ENCODE measurements at regions of chr3 and their contacts with region 1.

Region 1: DNA sequence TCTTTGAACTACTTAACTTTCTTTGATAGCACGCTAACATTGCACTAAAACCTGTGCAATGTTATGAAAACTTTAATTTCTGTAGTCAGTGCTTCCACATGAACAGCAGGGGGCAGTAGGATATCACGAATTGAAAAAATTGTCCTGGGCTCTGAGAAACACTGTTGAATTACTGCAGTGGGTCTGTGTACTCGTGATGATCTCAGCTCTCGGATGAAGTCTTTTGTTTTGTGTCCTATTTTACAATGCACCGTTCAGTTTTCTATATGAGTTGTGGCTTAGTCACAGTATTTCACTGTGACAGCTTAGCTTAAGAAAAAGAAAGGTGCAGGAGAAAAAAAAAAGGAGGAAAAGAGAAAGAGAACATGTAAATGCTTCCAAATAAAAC is 141.3 kb upstream of the CCDC54 start:
- DNase-seq: no peak
- ATAC-seq: peak; percentile 82

Region 2: GRCh38 chr3:107208100-107208499 is 27.8 kb before region 1 on chr3:
- intact Hi-C with region 1: loop called (anchors 1 kb)
- DNase-seq: no peak
- ATAC-seq: peak; percentile 94

Region 3: GRCh38 chr3:107429320-107430181 is 193.6 kb after region 1 on chr3:
- intact Hi-C with region 1: loop called (anchors 2 kb)
- DNase-seq: peak; percentile 84
- ATAC-seq: peak; percentile 88

Region 4: DNA sequence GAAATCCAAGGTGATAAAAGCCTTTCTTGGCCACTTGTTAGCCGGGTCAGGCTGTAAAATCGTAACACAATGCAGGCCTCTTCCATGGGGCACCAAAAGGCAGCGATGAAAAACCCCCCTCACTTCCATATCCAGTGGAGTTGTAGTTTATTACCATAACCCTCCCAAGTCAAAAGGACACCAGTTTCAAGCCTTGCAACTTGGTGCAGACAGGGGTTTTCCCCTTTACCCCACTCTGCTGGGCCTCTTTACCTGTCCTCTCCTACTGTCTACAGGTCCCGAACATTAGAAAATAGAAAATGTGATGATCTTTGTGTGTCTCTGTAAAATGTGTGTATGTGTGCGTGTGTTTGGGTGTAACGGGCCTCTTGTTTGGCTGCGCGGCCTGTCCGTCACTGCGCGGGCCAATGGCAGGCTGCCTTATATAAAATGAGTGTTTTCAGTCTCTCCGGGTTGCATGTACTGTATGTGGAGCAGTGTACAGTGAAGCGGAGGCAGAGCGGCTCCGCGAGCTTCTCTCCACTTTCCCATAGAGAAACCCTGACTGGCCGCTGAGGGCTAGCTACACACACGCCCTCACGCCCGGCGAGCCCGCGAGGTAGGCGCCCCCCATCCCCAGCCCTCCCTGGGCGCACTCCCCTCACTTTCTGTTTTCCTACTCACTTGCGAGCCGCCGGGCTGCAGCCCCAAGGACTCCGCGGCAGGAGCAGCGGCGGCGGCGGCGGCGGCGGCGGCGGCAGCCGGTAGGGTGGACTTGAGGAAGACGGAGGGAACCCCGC is 286.8 kb after region 1 on chr3 and contains the start of gene BBX:
- intact Hi-C with region 1: loop called (anchors 5 kb)
- DNase-seq: peak; percentile 94
- ATAC-seq: peak; percentile 98
- total RNA-seq, gene BBX: 37.7 TPM

Region 5: DNA sequence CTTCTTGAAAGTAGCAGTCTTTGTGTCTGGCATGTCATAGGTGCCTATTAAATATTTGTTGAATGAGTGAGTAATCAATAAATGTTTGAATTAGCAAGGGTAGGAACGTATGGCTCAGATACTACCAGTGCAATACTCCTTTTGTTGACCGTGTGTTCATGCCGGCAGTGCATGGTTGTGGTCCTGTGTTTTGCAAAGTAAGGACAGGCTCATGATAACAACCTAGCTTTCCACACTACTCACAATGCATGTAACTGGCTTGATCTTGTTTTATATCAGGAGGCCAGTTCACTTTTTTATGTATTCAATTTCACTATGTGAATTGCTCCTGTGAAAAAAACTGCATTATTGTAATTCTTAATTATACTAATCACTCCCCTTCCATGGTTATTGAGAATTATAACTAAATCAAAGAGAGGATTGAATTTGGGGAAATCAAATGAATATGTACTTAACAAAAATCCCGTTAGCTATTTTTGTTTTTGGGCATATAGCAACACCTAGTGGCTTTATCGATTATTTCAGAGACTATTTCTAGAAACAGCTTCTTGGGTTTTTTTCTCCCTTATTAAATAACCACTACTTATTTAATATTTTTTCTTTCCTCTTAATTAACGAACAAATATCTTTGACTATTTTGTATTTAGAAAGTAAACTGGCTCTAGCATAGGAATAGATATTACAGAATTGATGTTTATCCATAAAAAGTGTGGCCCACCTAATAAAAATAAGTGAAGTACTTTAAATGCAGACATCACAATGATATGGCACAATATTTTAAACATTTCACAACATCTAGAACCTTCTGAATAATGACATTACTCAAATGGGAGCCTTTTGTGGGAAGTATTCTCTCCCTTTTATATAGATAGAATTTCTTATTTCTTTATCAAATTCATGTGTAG is 505.3 kb after region 1 on chr3:
- intact Hi-C with region 1: loop called (anchors 5 kb)
- DNase-seq: no peak
- ATAC-seq: no peak

Region 6: DNA sequence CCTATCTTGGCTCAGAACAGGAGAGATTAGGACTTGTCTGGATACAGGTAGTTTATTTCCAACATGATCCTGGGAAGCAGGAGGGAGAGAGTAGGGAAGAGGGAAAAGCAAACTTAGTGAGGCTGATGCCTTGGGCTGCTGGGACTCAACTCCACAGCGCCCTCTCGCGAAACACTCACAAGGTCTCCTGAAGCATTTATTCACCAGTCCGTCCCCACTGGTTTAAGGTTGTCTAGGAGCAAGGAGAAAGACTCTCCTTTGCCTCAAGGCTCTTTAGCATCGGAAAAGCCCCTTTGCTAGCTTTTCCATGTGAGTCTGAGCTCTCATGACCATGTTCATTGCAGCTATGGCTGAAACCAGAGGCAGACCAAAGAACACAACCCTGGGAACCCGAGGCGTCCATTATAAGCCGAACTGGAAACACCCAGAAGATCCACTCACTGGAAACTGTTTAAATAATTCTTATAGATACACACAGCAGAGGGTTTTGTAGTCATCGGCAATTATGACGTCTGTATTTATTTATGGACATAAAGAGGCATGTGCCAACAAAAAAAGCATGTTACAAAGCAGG is 610.4 kb after region 1 on chr3:
- intact Hi-C with region 1: loop called (anchors 5 kb)
- DNase-seq: peak; percentile 72
- ATAC-seq: peak; percentile 72

Region 7: DNA sequence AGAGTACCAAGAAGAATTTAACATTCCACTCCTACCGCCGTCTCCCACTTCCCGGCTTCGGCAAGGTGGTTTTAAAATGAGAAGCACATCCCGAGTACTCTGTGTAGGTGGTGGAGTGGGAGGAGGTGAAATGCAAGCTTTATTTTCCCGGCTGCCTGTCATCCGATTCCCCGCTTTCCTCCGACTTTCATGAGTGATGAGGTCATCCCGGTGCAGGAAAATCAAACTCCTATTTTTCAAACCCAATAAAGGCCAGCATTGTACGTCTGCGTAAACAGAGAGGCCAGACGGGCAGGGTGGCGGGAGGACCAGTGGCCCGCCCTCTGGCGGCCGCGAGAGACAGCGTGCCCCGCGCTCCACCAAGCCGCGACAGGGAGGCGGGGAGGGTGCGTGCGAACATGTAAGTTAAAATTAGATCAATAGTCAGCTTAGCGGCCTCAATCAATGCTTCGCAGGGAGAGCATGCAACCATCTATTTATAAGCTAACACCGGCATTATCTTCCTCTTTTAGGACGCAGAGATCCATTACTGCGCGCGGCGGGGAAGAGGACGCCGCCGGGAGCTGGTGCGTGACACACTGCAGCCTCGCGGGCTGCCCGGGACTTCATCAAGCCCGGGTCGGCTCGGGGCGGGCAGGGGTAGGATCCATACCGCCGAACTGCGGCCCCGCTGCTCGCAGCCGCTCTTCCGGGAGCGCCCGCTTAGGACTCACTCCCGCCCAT is 691.6 kb after region 1 on chr3:
- intact Hi-C with region 1: loop called (anchors 5 kb)
- DNase-seq: peak; percentile 86
- ATAC-seq: peak; percentile 96

Measured in Right ventricle myocardium inferior (tissue), 1 donor.